HCT116 (cell line): ENCODE measurements at regions of chr10 and their contacts with region 1.

Region 1: DNA sequence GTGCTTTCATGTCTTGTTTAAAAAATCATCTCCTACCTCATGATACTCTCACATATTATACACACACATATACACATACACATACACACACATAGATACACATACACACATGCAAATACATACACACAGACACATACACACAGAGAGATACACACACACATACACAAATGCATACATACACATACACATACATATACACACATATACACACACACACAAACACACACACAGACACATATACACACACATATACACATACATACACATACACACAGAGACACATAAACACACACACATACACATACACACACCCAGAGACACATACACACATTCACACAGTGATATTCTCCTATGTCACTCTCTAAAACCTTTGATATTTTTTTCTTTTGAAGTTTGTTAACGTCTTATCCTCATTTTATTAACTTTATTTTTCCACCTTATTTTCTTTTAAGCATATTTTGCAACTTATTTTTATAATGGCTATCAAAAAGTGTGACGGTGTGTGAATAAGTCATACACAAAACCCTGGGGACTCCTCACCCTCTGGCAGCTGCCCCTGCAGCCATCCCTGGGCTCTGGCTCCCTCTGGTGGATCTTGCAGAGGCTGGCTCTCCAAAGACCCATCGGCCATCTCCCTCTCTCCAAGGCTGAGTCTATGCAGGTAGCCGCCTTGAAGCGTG is 3.9 kb upstream of the C10orf120 start:
- DNase-seq: peak; percentile 47
- ATAC-seq: peak; percentile 99
- H3K4me3 ChIP-seq: no peak overlapping the region
- H3K27ac ChIP-seq: no peak overlapping the region
- H3K4me1 ChIP-seq: no peaks in the 10 kb centered on the region
- H3K27me3 ChIP-seq: peaks cover 15% of the 10 kb centered on the region
- CTCF ChIP-seq: peak; percentile 92 to 99 (median 99)
- POLR2A ChIP-seq: no peak
- RAD21 ChIP-seq: peak; percentile 99

Region 2: GRCh38 chr10:122010405-122011050 is 693.1 kb before region 1 on chr10:
- CTCF ChIA-PET with region 1: no interaction called
- POLR2A ChIA-PET with region 1: no interaction called
- RAD21 ChIA-PET with region 1: no interaction called
- intact Hi-C with region 1: no loop called
- DNase-seq: no peak
- ATAC-seq: no peak
- H3K4me3 ChIP-seq: no peak overlapping the region
- H3K27ac ChIP-seq: no peak overlapping the region
- H3K4me1 ChIP-seq: no peaks in the 10 kb centered on the region
- H3K27me3 ChIP-seq: no peaks in the 10 kb centered on the region
- CTCF ChIP-seq: no peak
- POLR2A ChIP-seq: no peak
- RAD21 ChIP-seq: no peak

Region 3: DNA sequence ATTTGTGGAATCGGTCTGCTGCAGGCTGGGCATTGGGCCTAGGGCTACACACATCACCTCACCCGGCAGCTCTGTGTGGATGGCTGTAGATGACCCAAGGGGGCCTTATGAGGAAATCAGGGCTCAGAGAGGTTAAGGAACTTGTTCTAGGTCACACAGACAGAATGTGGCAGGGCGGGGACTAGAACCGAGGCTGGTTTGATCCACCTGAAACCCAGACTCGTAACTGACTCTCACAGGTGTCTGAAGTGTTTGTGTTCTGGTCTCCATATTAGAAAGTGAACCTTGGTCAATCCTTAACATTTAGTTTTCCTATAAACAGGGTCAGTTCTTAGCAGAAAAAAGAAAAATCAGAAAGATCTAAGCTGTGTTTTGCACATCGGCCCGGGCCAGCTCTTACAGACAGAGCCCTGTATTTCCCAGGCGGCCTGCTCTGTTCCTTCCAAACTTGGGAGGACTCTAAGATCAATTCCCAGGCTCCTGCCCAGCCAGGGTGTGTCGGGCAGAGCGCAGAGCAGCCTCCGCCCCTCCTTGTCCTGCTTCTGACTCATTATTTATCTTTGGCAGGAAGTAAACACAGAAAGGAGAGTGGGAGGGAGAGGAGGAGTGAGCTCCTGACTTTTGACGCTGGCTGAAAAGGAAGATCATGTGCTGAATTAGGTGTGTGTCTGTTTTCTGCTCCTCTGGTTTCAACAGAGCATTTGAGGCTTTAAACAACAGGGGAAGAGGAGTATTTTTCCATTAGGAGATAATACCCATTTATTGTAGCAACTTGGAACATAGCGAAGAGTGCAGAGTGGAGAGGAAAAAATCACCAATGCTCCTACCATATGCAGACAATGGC is 640.5 kb before region 1 on chr10:
- CTCF ChIA-PET with region 1: no interaction called
- POLR2A ChIA-PET with region 1: no interaction called
- RAD21 ChIA-PET with region 1: no interaction called
- intact Hi-C with region 1: loop called (anchors 10 kb)
- DNase-seq: peak; percentile 91
- ATAC-seq: peak; percentile 98
- H3K4me3 ChIP-seq: peak overlapping the region; percentile 0 to 28; a peak in 2 of 4 replicates
- H3K27ac ChIP-seq: peak overlapping the region; percentile 74
- H3K4me1 ChIP-seq: peaks cover 31 to 35% of the 10 kb centered on the region in 2 experiments
- H3K27me3 ChIP-seq: no peaks in the 10 kb centered on the region
- CTCF ChIP-seq: no peak
- POLR2A ChIP-seq: no peak
- RAD21 ChIP-seq: peak; percentile 42

Region 4: GRCh38 chr10:122279725-122280141 is 423.8 kb before region 1 on chr10:
- CTCF ChIA-PET with region 1: interaction called, 6 read pairs
- POLR2A ChIA-PET with region 1: no interaction called
- RAD21 ChIA-PET with region 1: no interaction called
- intact Hi-C with region 1: loop called (anchors 1 kb)
- DNase-seq: peak; percentile 70
- ATAC-seq: peak; percentile 87
- H3K4me3 ChIP-seq: no peak overlapping the region
- H3K27ac ChIP-seq: no peak overlapping the region
- H3K4me1 ChIP-seq: peaks cover 3 to 15% of the 10 kb centered on the region in 2 experiments; a peak in 3 of 4 replicates
- H3K27me3 ChIP-seq: no peaks in the 10 kb centered on the region
- CTCF ChIP-seq: peak; percentile 88 to 98 (median 97); a peak in 5 of 6 replicates
- POLR2A ChIP-seq: no peak
- RAD21 ChIP-seq: peak; percentile 98

Region 5: DNA sequence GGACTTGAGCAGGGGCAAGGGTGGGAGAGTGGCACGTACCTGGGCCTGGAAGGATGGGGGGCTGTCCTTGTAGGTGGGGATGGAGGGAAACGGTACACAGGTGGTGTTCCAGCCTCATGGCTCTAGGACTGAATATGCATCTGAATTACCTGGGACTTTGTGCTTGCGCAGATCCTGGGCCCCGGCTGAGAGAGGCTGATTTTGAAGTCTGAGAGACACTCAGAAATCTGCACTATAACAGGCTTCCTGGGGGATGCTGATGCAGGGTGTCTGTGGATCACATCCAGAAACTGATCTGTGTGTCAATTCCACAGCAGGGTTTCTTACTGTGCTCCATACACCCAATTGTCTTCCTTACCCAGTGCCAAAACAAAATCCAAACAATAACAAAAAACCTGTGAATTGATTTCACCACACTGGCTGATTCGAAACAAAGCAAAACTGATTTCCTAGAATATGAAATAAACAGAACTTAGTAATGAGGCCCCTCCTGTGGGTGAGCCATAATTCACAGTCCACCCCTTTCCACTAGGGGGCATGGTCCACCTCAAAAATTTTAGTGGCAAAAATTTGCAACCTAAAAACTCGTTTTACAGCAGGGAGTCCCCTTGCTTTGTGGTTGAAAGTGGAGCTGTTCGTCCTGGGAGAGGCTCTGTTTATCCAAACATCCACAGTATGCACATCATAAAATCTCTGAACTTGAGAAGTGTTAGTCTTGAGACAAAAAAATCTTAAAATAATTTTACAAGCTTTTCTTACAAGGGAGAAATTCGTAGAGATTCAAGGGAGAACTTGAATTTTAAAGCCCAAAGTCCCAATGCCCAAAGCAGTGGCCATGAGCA is 361.1 kb before region 1 on chr10:
- CTCF ChIA-PET with region 1: no interaction called
- POLR2A ChIA-PET with region 1: no interaction called
- RAD21 ChIA-PET with region 1: no interaction called
- intact Hi-C with region 1: loop called (anchors 1 kb)
- DNase-seq: peak; percentile 39
- ATAC-seq: peak; percentile 73
- H3K4me3 ChIP-seq: no peak overlapping the region
- H3K27ac ChIP-seq: no peak overlapping the region
- H3K4me1 ChIP-seq: peaks cover 7 to 17% of the 10 kb centered on the region in 2 experiments
- H3K27me3 ChIP-seq: no peaks in the 10 kb centered on the region
- CTCF ChIP-seq: peak; percentile 90 to 98 (median 90)
- POLR2A ChIP-seq: no peak
- RAD21 ChIP-seq: peak; percentile 89

Region 6: GRCh38 chr10:122525788-122526187 is 177.8 kb before region 1 on chr10:
- CTCF ChIA-PET with region 1: no interaction called
- POLR2A ChIA-PET with region 1: no interaction called
- RAD21 ChIA-PET with region 1: no interaction called
- intact Hi-C with region 1: loop called (anchors 1 kb)
- DNase-seq: peak; percentile 23
- ATAC-seq: peak; percentile 84
- H3K4me3 ChIP-seq: no peak overlapping the region
- H3K27ac ChIP-seq: no peak overlapping the region
- H3K4me1 ChIP-seq: no peaks in the 10 kb centered on the region
- H3K27me3 ChIP-seq: peaks cover 27% of the 10 kb centered on the region; the same call in 1 of the 2 replicates
- CTCF ChIP-seq: peak; percentile 55 to 77 (median 60)
- POLR2A ChIP-seq: no peak
- RAD21 ChIP-seq: peak; percentile 79